Activated naive CD4-positive, alpha-beta T cell treated with anti-CD3 and anti-CD28 coated beads for 36 hours (primary cell): ENCODE measurements at regions of chr3 and their contacts with region 1.

Region 1: GRCh38 chr3:9932843-9933560 is 632 bp upstream of the CRELD1 start:
- DNase-seq: peak; percentile 92
- H3K4me3 Mint-ChIP-seq: peak overlapping the region; percentile 90
- H3K27ac Mint-ChIP-seq: peak overlapping the region; percentile 85
- H3K4me1 Mint-ChIP-seq: peaks cover 28% of the 10 kb centered on the region
- H3K27me3 Mint-ChIP-seq: no peaks in the 10 kb centered on the region

Region 2: GRCh38 chr3:9503283-9503682 is 429.7 kb before region 1 on chr3:
- CTCF ChIA-PET with region 1: interaction called, 3 read pairs
- intact Hi-C with region 1: loop called (anchors 1 kb)
- DNase-seq: peak; percentile 83
- H3K4me3 Mint-ChIP-seq: no peak overlapping the region
- H3K27ac Mint-ChIP-seq: no peak overlapping the region
- H3K4me1 Mint-ChIP-seq: peaks cover 6% of the 10 kb centered on the region
- H3K27me3 Mint-ChIP-seq: peaks cover 24% of the 10 kb centered on the region

Region 3: DNA sequence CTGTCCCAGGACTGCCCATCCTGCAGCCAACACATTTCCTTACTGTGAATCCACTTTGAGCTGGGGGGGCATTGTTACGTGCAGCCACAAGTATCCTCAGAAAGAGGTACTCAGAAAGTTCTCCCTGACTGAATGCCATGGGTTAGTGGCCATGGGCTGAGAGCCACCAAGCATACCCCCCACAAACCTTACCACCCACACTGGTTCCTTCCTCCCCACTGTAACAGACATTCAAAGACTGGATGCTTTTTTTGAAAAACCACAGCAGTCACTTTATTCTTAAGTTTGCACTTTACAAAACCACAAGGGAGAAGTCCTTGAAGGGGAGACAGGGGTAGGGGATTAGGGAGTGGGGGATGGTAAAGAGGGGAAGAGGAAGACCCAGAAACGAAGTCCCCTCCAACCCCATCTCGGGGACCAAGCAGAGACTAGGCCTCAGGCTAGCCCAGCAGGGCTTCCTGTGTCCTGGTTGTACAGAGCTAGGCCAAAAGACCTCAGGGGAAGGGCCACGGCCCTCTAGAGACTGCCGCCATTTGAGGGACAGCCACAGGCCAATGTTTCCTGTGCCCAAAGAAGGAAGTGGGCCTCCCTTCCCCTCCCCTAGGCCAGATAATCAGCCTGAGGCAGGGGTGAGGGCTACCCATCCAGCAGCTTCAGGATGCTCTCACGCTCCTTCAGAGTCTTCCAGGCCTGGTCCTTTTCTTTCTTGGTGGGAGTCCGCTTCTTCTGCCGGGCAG is 153.1 kb before region 1 on chr3:
- CTCF ChIA-PET with region 1: interaction called, 4 read pairs
- intact Hi-C with region 1: loop called (anchors 2 kb)
- DNase-seq: peak; percentile 47
- H3K4me3 Mint-ChIP-seq: no peak overlapping the region
- H3K27ac Mint-ChIP-seq: peak overlapping the region; percentile 91
- H3K4me1 Mint-ChIP-seq: peaks cover 56% of the 10 kb centered on the region
- H3K27me3 Mint-ChIP-seq: no peaks in the 10 kb centered on the region

Region 4: DNA sequence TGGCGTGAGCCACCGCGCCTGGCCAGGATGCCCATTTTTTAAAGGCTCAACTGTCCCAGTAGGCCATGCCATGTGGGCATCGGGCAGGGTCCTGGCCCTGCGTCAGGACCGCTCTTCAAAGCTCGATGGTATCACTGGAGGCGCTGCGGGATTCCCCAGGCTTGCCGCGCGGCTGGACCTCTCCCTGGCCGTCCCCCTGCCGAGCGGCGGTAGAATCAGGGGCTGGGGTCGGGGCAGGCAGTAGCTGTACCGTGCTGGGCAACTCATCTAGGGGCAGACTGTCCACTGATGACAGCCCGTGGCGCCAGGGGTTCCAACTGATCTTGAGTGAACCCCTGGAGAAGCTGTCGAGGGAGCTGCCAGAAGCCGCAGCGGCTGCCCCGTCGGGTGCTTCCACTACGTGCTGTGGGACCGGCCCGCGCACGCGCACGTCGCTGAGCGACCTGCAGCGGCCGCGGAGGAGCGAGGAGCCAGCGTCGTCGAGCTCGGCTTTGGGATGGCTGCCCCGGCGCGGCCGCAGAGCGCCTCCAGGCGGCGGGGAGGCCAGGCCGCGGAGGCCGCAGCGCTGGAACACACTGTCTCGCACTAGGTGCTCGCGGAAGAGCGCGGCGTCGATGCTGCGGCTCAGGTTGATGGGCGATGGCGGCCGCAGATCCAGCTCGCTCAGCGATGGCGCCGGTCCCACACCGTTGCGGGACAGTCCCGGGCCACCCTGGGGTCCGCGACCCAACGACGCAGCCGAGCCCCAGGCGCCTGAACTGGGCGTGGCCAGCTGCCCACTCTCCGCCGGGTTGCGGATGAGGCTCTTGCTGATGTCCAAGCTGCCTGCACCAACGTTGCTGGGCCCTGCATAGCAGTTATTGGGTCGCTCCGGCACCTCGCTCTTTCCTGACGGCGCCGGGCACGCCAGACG is 13.4 kb after region 1 on chr3:
- CTCF ChIA-PET with region 1: interaction called, 18 read pairs
- intact Hi-C with region 1: loop called (anchors 1 kb)
- DNase-seq: peak; percentile 79
- H3K4me3 Mint-ChIP-seq: peak overlapping the region; percentile 79
- H3K27ac Mint-ChIP-seq: peak overlapping the region; percentile 79
- H3K4me1 Mint-ChIP-seq: peaks cover 17% of the 10 kb centered on the region
- H3K27me3 Mint-ChIP-seq: no peaks in the 10 kb centered on the region

Region 5: DNA sequence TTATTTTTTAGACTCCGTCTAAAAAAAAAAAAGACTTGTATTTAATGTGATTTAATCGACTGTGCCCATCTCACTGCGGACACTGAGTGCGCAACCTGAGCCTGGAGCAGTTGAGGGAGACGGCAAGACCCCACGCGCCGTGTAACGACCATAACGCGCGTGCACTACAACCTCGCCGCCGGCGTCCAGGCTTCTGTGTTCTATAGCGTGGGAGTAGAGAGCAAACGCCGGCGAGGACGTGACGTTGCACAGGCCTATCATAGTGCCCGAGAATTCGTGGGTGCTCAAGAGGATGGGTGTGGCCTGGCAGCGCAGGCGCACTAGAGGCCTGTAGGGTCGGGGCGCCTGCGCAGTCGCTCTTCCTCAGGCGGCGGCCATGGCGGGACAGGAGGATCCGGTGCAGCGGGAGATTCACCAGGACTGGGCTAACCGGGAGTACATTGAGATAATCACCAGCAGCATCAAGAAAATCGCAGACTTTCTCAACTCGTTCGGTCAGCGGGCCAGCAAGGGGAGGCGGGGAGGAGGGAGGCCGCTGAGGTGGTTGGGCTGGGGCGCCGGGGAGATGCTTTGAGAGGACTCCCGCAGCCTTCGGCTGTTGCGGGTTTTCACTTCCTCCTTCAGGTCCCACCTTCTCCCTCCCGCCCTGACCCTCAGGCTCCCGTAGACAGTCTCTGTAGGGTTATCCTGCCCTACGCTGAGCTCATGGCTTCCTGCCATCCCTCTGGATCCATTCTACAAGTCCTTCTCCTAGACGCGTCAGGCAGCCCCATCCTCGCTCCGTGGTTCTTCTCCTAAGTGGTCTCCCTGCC is 182.5 kb after region 1 on chr3 and contains the start of gene BRK1:
- CTCF ChIA-PET with region 1: no interaction called
- intact Hi-C with region 1: loop called (anchors 1 kb)
- DNase-seq: peak; percentile 97
- H3K4me3 Mint-ChIP-seq: peak within 1 kb of the TSS; percentile 92
- H3K27ac Mint-ChIP-seq: peak within 1 kb of the TSS; percentile 94
- H3K4me1 Mint-ChIP-seq: peaks cover 31% of the 10 kb centered on the region
- H3K27me3 Mint-ChIP-seq: no peaks in the 10 kb centered on the region
- total RNA-seq, gene BRK1: 73.6 to 73.7 TPM

Region 6: DNA sequence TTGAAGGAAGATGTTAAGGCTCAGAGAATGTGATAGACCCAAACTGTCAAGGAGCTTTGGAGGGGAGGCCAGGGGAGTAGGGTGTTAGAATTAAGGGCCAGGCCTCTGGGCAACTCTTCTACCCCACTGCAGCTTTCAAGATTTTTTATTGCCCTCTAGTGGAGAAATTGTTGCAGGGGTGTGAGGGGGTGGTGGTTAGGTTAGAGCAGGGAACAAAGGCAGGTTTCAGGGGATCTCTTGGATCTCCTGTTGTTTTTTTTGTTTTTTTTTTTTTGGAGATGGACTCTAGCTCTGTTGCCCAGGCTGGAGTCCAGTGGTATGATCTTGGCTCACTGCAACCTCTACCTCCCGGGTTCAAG is 389.3 kb after region 1 on chr3:
- CTCF ChIA-PET with region 1: interaction called, 4 read pairs
- intact Hi-C with region 1: loop called (anchors 1 kb)
- DNase-seq: peak; percentile 29
- H3K4me3 Mint-ChIP-seq: no peak overlapping the region
- H3K27ac Mint-ChIP-seq: no peak overlapping the region
- H3K4me1 Mint-ChIP-seq: peaks cover 23% of the 10 kb centered on the region
- H3K27me3 Mint-ChIP-seq: peaks cover 1% of the 10 kb centered on the region